ENCODE measurements at regions of chr7 and their contacts with region 1.

Region 1: DNA sequence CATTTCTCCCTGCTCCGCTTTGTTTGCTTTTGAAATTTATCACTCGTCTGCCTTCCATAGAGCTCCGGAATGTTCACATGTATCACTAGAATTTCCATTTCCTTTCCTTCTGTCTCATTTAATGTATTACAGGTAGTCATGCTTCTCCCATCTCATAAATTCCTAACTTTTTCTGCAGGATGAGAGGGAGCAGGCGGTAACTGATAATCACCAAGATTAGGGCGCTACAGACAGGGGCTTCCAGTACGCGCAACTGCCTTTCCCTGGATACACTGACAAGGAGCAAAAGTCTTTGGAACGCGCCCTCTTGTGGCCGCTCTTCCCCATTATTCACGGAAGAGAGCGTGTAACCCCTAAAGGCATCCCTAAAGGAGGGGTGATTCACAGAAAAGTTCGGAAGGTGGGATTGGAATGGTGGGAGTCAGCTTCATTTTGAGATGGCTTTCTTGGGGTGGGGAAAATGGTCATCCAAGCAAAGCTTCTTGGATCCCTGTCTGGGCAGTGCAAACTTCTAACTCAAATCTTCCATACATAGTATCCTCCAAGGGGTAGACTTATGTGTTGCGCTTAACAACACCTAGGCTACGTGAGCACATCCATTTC is 6.5 kb downstream of the INHBA start:
- DNase-seq: peak; percentile 73
- H3K4me3 ChIP-seq: peak overlapping the region; percentile 13
- H3K4me3 Mint-ChIP-seq: peak overlapping the region; percentile 71
- H3K27ac Mint-ChIP-seq: peak overlapping the region; percentile 25
- H3K4me1 ChIP-seq: peaks cover 3% of the 10 kb centered on the region; the same call in 1 of the 2 replicates
- H3K4me1 Mint-ChIP-seq: peaks cover 19% of the 10 kb centered on the region
- H3K27me3 ChIP-seq: no peaks in the 10 kb centered on the region
- H3K27me3 Mint-ChIP-seq: peaks cover 3% of the 10 kb centered on the region
- CTCF ChIP-seq: peak; percentile 83 to 89

Region 2: GRCh38 chr7:40833888-40834234 is 862.6 kb before region 1 on chr7:
- CTCF ChIA-PET with region 1: no interaction called
- POLR2A ChIA-PET with region 1: no interaction called
- intact Hi-C with region 1: loop called (anchors 1 kb)
- DNase-seq: no peak
- H3K4me3 ChIP-seq: no peak overlapping the region
- H3K4me3 Mint-ChIP-seq: no peak overlapping the region
- H3K27ac Mint-ChIP-seq: no peak overlapping the region
- H3K4me1 ChIP-seq: no peaks in the 10 kb centered on the region
- H3K4me1 Mint-ChIP-seq: no peaks in the 10 kb centered on the region
- H3K27me3 ChIP-seq: no peaks in the 10 kb centered on the region
- H3K27me3 Mint-ChIP-seq: no peaks in the 10 kb centered on the region
- CTCF ChIP-seq: peak in 1 of 2 experiments; percentile 4

Region 3: GRCh38 chr7:41003031-41003925 is 693.1 kb before region 1 on chr7:
- CTCF ChIA-PET with region 1: interaction called, 6 read pairs
- POLR2A ChIA-PET with region 1: no interaction called
- intact Hi-C with region 1: loop called (anchors 1 kb)
- DNase-seq: peak; percentile 69 to 75
- H3K4me3 ChIP-seq: no peak overlapping the region
- H3K4me3 Mint-ChIP-seq: peak overlapping the region; percentile 45
- H3K27ac Mint-ChIP-seq: peak overlapping the region; percentile 88
- H3K4me1 ChIP-seq: peaks cover 36% of the 10 kb centered on the region
- H3K4me1 Mint-ChIP-seq: peaks cover 23% of the 10 kb centered on the region
- H3K27me3 ChIP-seq: no peaks in the 10 kb centered on the region
- H3K27me3 Mint-ChIP-seq: no peaks in the 10 kb centered on the region
- CTCF ChIP-seq: peak; percentile 70 to 85

Region 4: GRCh38 chr7:41045556-41046123 is 650.8 kb before region 1 on chr7:
- CTCF ChIA-PET with region 1: no interaction called
- POLR2A ChIA-PET with region 1: no interaction called
- intact Hi-C with region 1: loop called (anchors 1 kb)
- DNase-seq: peak; percentile 42 to 46
- H3K4me3 ChIP-seq: no peak overlapping the region
- H3K4me3 Mint-ChIP-seq: no peak overlapping the region
- H3K27ac Mint-ChIP-seq: no peak overlapping the region
- H3K4me1 ChIP-seq: no peaks in the 10 kb centered on the region
- H3K4me1 Mint-ChIP-seq: peaks cover 23% of the 10 kb centered on the region
- H3K27me3 ChIP-seq: no peaks in the 10 kb centered on the region
- H3K27me3 Mint-ChIP-seq: no peaks in the 10 kb centered on the region
- CTCF ChIP-seq: peak in 1 of 2 experiments; percentile 55

Region 5: GRCh38 chr7:41745451-41745850 is 49.0 kb after region 1 on chr7:
- CTCF ChIA-PET with region 1: no interaction called
- POLR2A ChIA-PET with region 1: no interaction called
- intact Hi-C with region 1: no loop called
- DNase-seq: no peak
- H3K4me3 ChIP-seq: no peak overlapping the region
- H3K4me3 Mint-ChIP-seq: no peak overlapping the region
- H3K27ac Mint-ChIP-seq: no peak overlapping the region
- H3K4me1 ChIP-seq: peaks cover 4% of the 10 kb centered on the region
- H3K4me1 Mint-ChIP-seq: no peaks in the 10 kb centered on the region
- H3K27me3 ChIP-seq: no peaks in the 10 kb centered on the region
- H3K27me3 Mint-ChIP-seq: no peaks in the 10 kb centered on the region
- CTCF ChIP-seq: no peak

Measured in Caco-2 (cell line).